PC-3 (cell line): ENCODE measurements at regions of chr17 and their contacts with region 1.

Region 1: GRCh38 chr17:49616601-49617131 is 41.0 kb downstream of the NXPH3 start:
- DNase-seq: no peak
- ATAC-seq: no peak
- H3K4me3 ChIP-seq: no peak overlapping the region
- H3K27ac ChIP-seq: no peak overlapping the region
- H3K4me1 ChIP-seq: no peaks in the 10 kb centered on the region
- H3K27me3 ChIP-seq: no peaks in the 10 kb centered on the region
- CTCF ChIP-seq: no peak

Region 2: GRCh38 chr17:49694847-49695683 is 78.4 kb after region 1 on chr17:
- CTCF ChIA-PET with region 1: no interaction called
- POLR2A ChIA-PET with region 1: no interaction called
- intact Hi-C with region 1: loop called (anchors 2 kb)
- DNase-seq: peak; percentile 66
- ATAC-seq: peak; percentile 31
- H3K4me3 ChIP-seq: peak overlapping the region; percentile 47
- H3K27ac ChIP-seq: no peak overlapping the region
- H3K4me1 ChIP-seq: no peaks in the 10 kb centered on the region
- H3K27me3 ChIP-seq: no peaks in the 10 kb centered on the region
- CTCF ChIP-seq: peak; percentile 99